ENCODE measurements at regions of chr10 and their contacts with region 1.

Region 1: DNA sequence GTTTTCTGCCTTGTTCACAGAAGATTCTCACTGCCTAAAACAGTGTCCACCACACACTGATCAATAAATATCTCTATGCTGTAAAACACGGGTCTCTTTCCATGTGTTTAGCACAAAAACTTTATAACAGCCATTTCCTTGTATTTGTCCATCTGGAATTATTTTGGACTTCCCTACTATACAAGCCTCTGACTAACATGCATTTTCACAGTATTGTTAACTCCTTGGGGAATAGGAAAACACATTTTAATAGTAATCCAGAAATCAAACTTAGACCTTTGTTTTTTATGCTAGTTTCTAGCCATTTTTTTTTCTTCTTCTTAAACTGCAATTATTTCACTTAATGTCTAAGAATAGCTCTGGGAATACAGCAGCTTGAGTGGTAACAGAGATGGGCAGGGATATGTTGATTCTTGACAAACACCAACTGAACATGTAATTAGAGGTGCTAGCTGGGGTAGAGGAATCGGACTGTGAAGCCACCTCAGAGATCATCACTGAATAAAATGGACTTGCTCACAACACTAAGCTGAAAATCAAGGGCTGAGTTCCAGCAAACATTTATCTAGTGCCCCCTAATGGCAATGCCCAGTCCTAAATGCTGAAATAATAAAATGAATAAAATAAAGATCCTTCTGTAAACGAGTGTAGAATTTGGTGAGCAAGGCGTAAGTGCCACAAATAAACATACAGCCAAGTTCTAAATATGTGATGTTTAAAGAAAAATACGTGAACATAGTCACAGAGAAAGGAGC is 593.1 kb downstream of the SORCS1 start:
- DNase-seq: no peak
- ATAC-seq: no peak
- H3K4me3 ChIP-seq: no peak overlapping the region
- H3K27ac ChIP-seq: no peak overlapping the region
- H3K4me1 ChIP-seq: no peaks in the 10 kb centered on the region
- H3K27me3 ChIP-seq: no peaks in the 10 kb centered on the region
- CTCF ChIP-seq: no peak; the same call in 1 of the 2 replicates
- EP300 ChIP-seq: no peak
- POLR2A ChIP-seq: no peak
- RAD21 ChIP-seq: no peak

Region 2: GRCh38 chr10:105797234-105797890 is 774.0 kb before region 1 on chr10:
- CTCF ChIA-PET with region 1: no interaction called
- POLR2A ChIA-PET with region 1: no interaction called
- in situ Hi-C with region 1: no loop called
- intact Hi-C with region 1: loop called (anchors 10 kb)
- DNase-seq: peak; percentile 8
- ATAC-seq: peak; percentile 65
- H3K4me3 ChIP-seq: no peak overlapping the region
- H3K27ac ChIP-seq: no peak overlapping the region
- H3K4me1 ChIP-seq: no peaks in the 10 kb centered on the region
- H3K27me3 ChIP-seq: no peaks in the 10 kb centered on the region
- CTCF ChIP-seq: peak; percentile 25; the same call in 1 of the 2 replicates
- EP300 ChIP-seq: no peak
- POLR2A ChIP-seq: no peak
- RAD21 ChIP-seq: no peak

Region 3: DNA sequence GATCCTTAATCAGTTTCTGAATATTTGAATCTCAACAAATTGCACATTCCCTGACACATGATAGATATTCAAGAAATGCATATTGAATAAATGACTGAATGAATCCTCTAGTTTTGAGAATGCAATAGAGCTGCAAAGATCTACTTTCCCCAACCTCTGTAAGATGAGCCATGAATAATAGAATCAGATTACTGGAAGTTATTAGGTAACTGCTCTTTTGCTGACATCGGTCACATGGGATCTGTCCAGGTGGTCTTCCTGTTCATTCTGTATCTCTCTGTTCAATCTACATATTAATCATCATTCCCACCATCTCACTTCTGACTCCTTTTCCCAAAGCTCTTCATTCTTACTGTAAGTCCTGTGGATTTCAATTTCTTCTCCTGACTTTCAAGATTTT is 45.5 kb before region 1 on chr10:
- CTCF ChIA-PET with region 1: no interaction called
- POLR2A ChIA-PET with region 1: no interaction called
- in situ Hi-C with region 1: no loop called
- intact Hi-C with region 1: no loop called
- DNase-seq: no peak
- ATAC-seq: no peak
- H3K4me3 ChIP-seq: no peak overlapping the region
- H3K27ac ChIP-seq: no peak overlapping the region
- H3K4me1 ChIP-seq: no peaks in the 10 kb centered on the region
- H3K27me3 ChIP-seq: no peaks in the 10 kb centered on the region
- CTCF ChIP-seq: no peak
- EP300 ChIP-seq: no peak
- POLR2A ChIP-seq: no peak
- RAD21 ChIP-seq: no peak

Region 4: DNA sequence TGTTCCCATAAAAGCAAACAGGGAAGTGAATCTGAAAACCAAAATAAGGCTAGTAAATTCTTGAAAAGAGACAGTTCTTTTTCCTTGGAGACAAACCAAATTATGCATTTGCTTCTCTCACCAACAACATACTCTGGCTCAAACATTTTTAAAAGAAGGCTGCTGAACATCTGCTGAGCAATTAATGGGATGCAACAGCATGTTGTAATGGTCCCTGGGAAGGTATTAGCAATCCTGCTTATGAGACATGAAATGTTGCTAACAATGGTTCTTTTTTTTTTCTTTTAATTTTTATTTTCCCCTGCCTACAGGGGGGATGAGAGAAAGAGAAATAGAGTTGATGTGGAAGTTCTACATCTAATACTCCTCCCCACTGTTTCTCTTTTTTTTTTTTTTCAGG is 21.0 kb after region 1 on chr10:
- CTCF ChIA-PET with region 1: no interaction called
- POLR2A ChIA-PET with region 1: no interaction called
- in situ Hi-C with region 1: no loop called
- intact Hi-C with region 1: no loop called
- DNase-seq: no peak
- ATAC-seq: no peak
- H3K4me3 ChIP-seq: no peak overlapping the region
- H3K27ac ChIP-seq: no peak overlapping the region
- H3K4me1 ChIP-seq: no peaks in the 10 kb centered on the region
- H3K27me3 ChIP-seq: no peaks in the 10 kb centered on the region; a peak in 1 of 5 replicates
- CTCF ChIP-seq: no peak
- EP300 ChIP-seq: no peak
- POLR2A ChIP-seq: no peak
- RAD21 ChIP-seq: no peak

Measured in HepG2 (cell line).